ENCODE measurements at regions of chr2 and their contacts with region 1.

Region 1: GRCh38 chr2:96951093-96951654 is 35.2 kb downstream of the FAM178B start:
- DNase-seq: peak; percentile 67 to 78 (median 76)
- H3K4me3 ChIP-seq: no peak overlapping the region
- H3K27ac ChIP-seq: no peak overlapping the region
- H3K4me1 ChIP-seq: peaks cover 0 to 29% (median 24%) of the 10 kb centered on the region in 4 experiments
- H3K27me3 ChIP-seq: peaks cover 0 to 2% (median 0%) of the 10 kb centered on the region in 5 experiments

Region 2: GRCh38 chr2:96868555-96869280 is 82.5 kb before region 1 on chr2:
- CTCF ChIA-PET with region 1: interaction called, 14 read pairs
- POLR2A ChIA-PET with region 1: interaction called, 3 read pairs
- DNase-seq: peak; percentile 65 to 81 (median 77)
- H3K4me3 ChIP-seq: peak overlapping the region; percentile 67 to 85 (median 71)
- H3K27ac ChIP-seq: peak overlapping the region in 1 of 2 experiments; percentile 64
- H3K4me1 ChIP-seq: peaks cover 0 to 43% (median 40%) of the 10 kb centered on the region in 4 experiments
- H3K27me3 ChIP-seq: peaks cover 0 to 5% (median 3%) of the 10 kb centered on the region in 5 experiments

Region 3: DNA sequence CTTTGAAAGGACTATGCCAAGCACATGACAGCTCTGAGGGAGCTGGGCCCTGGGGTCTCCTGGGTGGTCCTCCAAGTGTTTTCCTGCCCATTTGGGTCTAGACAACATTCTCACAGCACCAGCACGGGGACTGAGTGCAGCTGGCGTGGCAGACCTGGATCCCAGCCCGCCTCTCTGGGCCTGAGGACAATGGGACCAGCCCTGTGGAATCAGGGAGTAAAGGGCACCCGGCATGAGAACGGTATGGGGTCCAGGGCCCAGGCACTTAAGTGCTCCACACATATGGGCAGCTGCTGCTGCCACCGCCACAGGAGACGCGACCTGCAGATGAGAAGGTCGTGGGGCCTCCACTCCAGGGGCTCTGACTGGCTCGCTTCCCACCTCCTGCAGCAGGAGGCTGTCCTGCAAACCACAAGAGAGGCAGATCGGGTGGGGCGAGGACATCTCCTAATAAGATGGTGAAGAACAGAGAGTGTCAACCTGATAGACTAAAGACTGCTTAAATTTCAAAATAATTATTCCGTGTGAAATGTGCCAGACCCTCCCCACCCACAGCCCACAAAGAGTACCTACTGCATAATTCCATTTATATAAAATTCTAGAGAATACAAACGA is 11.1 kb before region 1 on chr2:
- CTCF ChIA-PET with region 1: interaction called, 54 read pairs
- POLR2A ChIA-PET with region 1: no interaction called
- DNase-seq: no peak
- H3K4me3 ChIP-seq: no peak overlapping the region
- H3K27ac ChIP-seq: no peak overlapping the region
- H3K4me1 ChIP-seq: peaks cover 0 to 8% (median 3%) of the 10 kb centered on the region in 4 experiments
- H3K27me3 ChIP-seq: peaks cover 0 to 3% (median 0%) of the 10 kb centered on the region in 5 experiments

Region 4: DNA sequence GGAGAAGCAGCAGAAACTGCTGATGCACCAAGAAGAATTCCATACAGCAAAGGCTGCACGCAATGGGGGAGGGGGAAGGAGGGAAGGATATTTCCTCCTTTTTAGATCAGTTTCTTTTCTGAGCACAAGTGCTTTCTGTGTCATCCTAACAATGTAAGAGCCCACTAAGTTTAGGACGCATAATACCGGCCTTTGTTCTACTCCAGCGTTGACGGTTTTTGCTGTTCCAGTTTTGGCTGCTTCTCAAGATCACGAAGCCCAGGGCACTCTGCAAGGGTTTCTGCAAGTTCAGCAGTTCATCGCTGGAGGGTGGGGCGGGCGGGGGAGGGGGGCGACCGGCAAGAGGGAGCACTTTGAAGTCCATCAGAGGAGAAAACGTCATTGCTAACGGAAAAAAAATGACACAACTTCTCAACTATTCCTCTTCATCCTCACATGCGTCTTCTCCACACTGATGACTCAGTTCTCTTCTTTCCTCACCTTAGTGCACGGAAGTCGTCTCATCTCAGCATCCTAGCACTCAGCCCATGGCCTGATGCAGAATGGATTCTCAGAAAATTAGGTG is 26.5 kb after region 1 on chr2:
- CTCF ChIA-PET with region 1: no interaction called
- POLR2A ChIA-PET with region 1: no interaction called
- DNase-seq: no peak
- H3K4me3 ChIP-seq: no peak overlapping the region
- H3K27ac ChIP-seq: no peak overlapping the region
- H3K4me1 ChIP-seq: no peaks in the 10 kb centered on the region
- H3K27me3 ChIP-seq: no peaks in the 10 kb centered on the region

Region 5: DNA sequence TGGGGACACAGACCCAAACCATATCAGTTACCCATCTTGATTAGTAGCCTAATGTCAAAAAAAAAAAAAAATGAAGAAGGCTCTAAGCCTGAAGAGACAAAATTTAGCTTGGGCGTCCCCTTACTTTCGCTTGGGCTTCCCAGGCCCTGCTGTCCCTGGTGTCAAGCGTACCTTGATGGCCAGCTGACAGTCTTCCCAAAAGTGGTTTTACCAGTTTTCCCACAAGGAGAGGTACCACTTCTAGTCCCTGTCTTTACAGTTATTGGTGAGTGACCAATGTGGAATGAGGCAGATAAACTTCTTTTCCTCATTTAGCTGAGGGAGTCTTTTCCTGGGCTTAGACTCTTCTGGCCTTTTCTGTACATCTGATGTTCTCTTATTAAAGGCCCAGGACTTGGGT is 41.1 kb after region 1 on chr2:
- CTCF ChIA-PET with region 1: no interaction called
- POLR2A ChIA-PET with region 1: no interaction called
- DNase-seq: no peak
- H3K4me3 ChIP-seq: no peak overlapping the region
- H3K27ac ChIP-seq: no peak overlapping the region
- H3K4me1 ChIP-seq: no peaks in the 10 kb centered on the region
- H3K27me3 ChIP-seq: peaks cover 0 to 3% (median 0%) of the 10 kb centered on the region in 5 experiments

Measured in common myeloid progenitor, CD34-positive (primary cell).